GM10248 (cell line): ENCODE measurements at regions of chr15 and their contacts with region 1.

Region 1: GRCh38 chr15:100338971-100339444 is 2.8 kb downstream of the ADAMTS17 start:
- DNase-seq: no peak
- CTCF ChIP-seq: peak; percentile 27

Region 2: GRCh38 chr15:99928429-99928981 is 410.5 kb before region 1 on chr15:
- CTCF ChIA-PET with region 1: interaction called, 13 read pairs
- POLR2A ChIA-PET with region 1: no interaction called
- DNase-seq: peak; percentile 86
- CTCF ChIP-seq: peak; percentile 77

Region 3: GRCh38 chr15:100457201-100457600 is 118.2 kb after region 1 on chr15:
- CTCF ChIA-PET with region 1: no interaction called
- POLR2A ChIA-PET with region 1: no interaction called
- DNase-seq: no peak
- CTCF ChIP-seq: no peak